ENCODE measurements at regions of chr13 and their contacts with region 1.

Region 1: GRCh38 chr13:27620377-27621115 is at the start of gene LNX2:
- DNase-seq: peak; percentile 98 to 99
- H3K4me3 ChIP-seq: peak within 1 kb of the TSS; percentile 76
- H3K4me3 Mint-ChIP-seq: peak within 1 kb of the TSS; percentile 99
- H3K27ac Mint-ChIP-seq: peak within 1 kb of the TSS; percentile 96
- H3K4me1 ChIP-seq: peaks cover 47% of the 10 kb centered on the region
- H3K4me1 Mint-ChIP-seq: peaks cover 39% of the 10 kb centered on the region
- H3K27me3 ChIP-seq: no peaks in the 10 kb centered on the region
- H3K27me3 Mint-ChIP-seq: no peaks in the 10 kb centered on the region
- CTCF ChIP-seq: no peak
- total RNA-seq, gene LNX2: 23.8 and 24.4 TPM in 2 replicates

Region 2: DNA sequence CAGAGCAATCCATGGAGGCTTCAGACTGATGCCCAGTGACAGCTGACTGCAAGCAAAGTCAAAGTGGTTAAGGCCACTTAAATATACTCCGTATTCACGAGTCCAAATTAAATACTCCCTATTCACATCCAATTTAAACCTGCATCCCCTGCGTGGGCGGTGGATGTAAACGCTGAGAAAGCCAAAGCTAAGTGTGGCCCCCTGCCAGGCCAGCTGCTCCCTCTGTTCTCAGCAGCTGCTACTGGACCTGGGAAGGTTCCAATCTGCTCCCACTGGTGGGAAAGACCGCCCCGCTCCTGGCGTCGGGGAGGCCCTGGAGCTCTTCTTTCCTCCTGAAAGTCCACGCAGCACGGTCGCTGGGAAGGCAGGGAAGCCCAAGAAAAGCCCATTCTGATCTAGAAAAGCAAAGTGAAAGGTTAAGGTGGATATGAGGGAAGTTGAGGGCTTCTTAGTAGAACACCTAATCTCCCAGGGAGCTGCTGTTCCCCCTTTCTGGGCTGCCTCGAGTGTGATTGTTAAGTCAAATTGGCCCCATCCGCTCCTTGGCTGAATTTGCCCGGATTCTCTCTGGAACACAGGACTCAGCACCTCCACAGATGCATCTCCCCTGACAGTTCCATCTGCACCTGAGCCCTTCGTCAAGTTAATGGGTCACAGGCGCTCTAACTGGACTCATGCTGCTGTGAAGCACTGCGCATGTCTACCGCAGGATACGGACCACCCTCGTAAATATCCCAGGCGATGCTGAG is 654.4 kb before region 1 on chr13:
- CTCF ChIA-PET with region 1: no interaction called
- POLR2A ChIA-PET with region 1: no interaction called
- intact Hi-C with region 1: loop called (anchors 10 kb)
- DNase-seq: no peak
- H3K4me3 ChIP-seq: no peak overlapping the region
- H3K4me3 Mint-ChIP-seq: no peak overlapping the region
- H3K27ac Mint-ChIP-seq: peak overlapping the region; percentile 92
- H3K4me1 ChIP-seq: peaks cover 84% of the 10 kb centered on the region
- H3K4me1 Mint-ChIP-seq: peaks cover 78% of the 10 kb centered on the region
- H3K27me3 ChIP-seq: no peaks in the 10 kb centered on the region
- H3K27me3 Mint-ChIP-seq: no peaks in the 10 kb centered on the region
- CTCF ChIP-seq: no peak

Region 3: DNA sequence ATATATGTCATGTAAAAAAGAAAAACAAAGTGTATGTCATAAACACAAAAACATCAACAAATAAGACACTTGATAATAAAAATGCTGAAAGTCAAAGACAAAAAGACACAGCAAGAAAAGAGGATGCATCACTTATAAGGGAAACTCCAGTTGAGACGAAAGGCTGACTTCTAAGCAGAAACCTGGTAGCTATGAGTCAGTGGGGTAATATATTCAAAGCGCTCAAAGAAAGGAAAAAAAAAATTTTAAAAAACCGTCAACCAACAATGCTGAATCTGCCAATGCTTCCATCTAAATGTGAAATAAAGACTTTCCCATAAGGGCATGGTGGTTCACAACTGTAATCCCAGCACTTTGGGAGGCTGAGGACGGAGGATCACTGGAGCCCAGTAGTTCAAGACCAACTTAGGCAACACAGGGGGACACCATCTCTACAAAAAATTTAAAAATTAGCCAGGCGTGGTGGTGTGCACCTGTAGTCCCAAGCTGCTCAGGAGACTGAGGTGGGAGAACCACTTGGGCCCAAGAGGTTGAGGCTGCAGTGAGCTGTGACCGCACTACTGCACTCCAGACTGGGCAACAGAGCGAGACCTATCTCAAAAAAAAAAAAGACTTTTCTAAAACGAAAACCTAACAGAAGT is 472.9 kb before region 1 on chr13:
- CTCF ChIA-PET with region 1: no interaction called
- POLR2A ChIA-PET with region 1: no interaction called
- intact Hi-C with region 1: no loop called
- DNase-seq: no peak
- H3K4me3 ChIP-seq: no peak overlapping the region
- H3K4me3 Mint-ChIP-seq: no peak overlapping the region
- H3K27ac Mint-ChIP-seq: no peak overlapping the region
- H3K4me1 ChIP-seq: peaks cover 7% of the 10 kb centered on the region
- H3K4me1 Mint-ChIP-seq: peaks cover 12% of the 10 kb centered on the region
- H3K27me3 ChIP-seq: no peaks in the 10 kb centered on the region
- H3K27me3 Mint-ChIP-seq: no peaks in the 10 kb centered on the region
- CTCF ChIP-seq: no peak

Region 4: GRCh38 chr13:27183561-27184147 is 436.9 kb before region 1 on chr13:
- CTCF ChIA-PET with region 1: no interaction called
- POLR2A ChIA-PET with region 1: interaction called, 21 read pairs
- intact Hi-C with region 1: no loop called
- DNase-seq: no peak
- H3K4me3 ChIP-seq: no peak overlapping the region
- H3K4me3 Mint-ChIP-seq: no peak overlapping the region
- H3K27ac Mint-ChIP-seq: no peak overlapping the region
- H3K4me1 ChIP-seq: peaks cover 9% of the 10 kb centered on the region; the same call in 1 of the 2 replicates
- H3K4me1 Mint-ChIP-seq: peaks cover 19% of the 10 kb centered on the region
- H3K27me3 ChIP-seq: no peaks in the 10 kb centered on the region
- H3K27me3 Mint-ChIP-seq: no peaks in the 10 kb centered on the region
- CTCF ChIP-seq: no peak

Region 5: DNA sequence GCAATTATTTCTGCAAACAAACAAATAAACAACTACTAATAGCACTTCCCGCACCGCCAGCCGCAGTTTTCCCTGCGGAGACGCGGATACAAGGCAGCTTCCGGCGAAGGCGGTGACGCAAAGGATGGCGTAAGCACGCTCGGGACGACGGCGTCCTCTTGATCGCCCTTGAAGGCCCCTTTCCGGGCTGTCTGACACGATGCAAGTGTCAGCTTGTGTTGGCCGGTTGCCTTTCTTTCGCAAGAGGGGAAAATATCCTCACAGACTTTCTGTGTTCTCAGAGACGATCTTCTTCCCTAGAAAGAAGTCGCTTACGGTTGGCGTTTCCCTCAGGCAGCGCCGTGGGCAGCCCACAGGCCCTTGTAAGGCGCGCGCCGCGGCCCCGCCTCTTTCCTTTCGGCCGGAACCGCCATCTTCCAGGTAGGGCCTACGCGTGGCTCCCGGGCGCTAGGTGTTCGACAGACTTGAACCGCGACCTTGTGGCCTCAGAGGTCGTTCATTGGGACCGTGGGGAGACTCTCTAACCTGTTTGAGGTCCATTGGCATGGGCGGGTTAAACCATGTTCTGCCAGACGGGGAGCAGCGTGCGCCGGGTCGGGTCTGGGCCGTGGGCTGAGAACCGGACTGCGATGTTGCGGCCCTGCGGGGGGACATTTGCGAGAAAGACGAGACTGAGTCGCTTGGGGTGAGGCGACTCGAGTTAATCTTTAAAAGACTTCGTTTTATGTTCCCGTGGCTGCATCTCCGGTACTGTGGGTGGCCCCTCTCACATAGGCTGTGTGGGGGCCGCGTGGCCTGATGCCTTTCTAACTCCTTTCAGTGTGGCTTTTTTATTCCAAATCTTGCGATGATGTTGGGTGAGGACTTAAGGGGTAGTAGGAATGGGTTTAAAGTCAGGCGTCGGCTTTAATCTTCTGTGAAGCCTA is 369.1 kb before region 1 on chr13 and contains the start of gene RPL21:
- CTCF ChIA-PET with region 1: no interaction called
- POLR2A ChIA-PET with region 1: no interaction called
- intact Hi-C with region 1: no loop called
- DNase-seq: peak; percentile 93 to 96
- H3K4me3 ChIP-seq: peak within 1 kb of the TSS; percentile 90
- H3K4me3 Mint-ChIP-seq: peak within 1 kb of the TSS; percentile 86
- H3K27ac Mint-ChIP-seq: peak within 1 kb of the TSS; percentile 99
- H3K4me1 ChIP-seq: peaks cover 16% of the 10 kb centered on the region; the same call in 1 of the 2 replicates
- H3K4me1 Mint-ChIP-seq: peaks cover 12% of the 10 kb centered on the region
- H3K27me3 ChIP-seq: no peaks in the 10 kb centered on the region
- H3K27me3 Mint-ChIP-seq: no peaks in the 10 kb centered on the region
- CTCF ChIP-seq: no peak
- total RNA-seq, gene RPL21: 1,158 and 1,201 TPM in 2 replicates

Region 6: DNA sequence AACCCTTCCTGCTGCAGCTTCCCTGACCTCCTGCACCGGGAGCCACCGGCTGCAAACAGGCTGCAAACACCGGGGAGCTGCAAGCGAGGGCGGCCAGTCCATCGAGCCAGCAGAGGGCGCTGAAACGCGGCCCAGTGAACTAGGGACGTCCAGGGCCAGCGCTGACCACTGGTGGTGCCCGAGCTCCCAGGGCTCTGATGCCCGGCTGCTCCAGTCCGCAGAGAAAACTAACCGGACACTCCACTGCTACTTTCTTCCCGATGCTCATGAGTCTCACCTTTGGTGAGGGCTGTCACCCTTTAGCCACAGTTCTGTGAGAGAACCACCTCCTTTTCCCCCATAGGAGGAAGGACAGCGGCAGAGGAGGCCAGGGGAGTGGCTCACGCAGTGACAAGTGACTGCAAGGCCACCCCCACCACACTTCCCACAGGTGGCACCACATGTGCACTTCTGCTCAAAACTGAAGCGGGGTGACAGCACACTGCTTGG is 87.3 kb before region 1 on chr13:
- CTCF ChIA-PET with region 1: no interaction called
- POLR2A ChIA-PET with region 1: no interaction called
- intact Hi-C with region 1: loop called (anchors 5 kb)
- DNase-seq: peak; percentile 72 to 87
- H3K4me3 ChIP-seq: no peak overlapping the region
- H3K4me3 Mint-ChIP-seq: no peak overlapping the region
- H3K27ac Mint-ChIP-seq: no peak overlapping the region
- H3K4me1 ChIP-seq: peaks cover 9% of the 10 kb centered on the region
- H3K4me1 Mint-ChIP-seq: peaks cover 11% of the 10 kb centered on the region
- H3K27me3 ChIP-seq: no peaks in the 10 kb centered on the region
- H3K27me3 Mint-ChIP-seq: no peaks in the 10 kb centered on the region
- CTCF ChIP-seq: peak; percentile 89 to 98

Region 7: DNA sequence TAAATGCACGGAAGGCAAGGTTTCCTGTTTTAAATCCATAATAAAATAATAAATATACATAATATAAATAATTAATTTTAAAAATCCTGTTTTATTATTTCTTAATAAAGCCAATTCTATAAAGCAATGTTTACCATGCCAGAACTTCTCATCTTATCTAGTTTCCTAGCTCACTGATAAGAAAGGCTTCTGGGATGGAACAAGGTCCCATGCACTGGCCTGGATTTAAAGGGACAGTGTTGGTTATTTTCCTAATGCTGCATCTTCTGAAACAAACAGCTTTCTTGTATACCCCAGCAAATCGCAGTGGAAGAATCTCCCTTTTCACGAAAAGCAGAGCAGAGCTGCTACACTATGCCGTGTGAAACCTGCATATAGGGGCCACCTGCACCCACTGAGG is 69.0 kb before region 1 on chr13:
- CTCF ChIA-PET with region 1: interaction called, 3 read pairs
- POLR2A ChIA-PET with region 1: interaction called, 7 read pairs
- intact Hi-C with region 1: loop called (anchors 2 kb)
- DNase-seq: peak in 1 of 2 experiments; percentile 21
- H3K4me3 ChIP-seq: no peak overlapping the region
- H3K4me3 Mint-ChIP-seq: peak overlapping the region; percentile 34
- H3K27ac Mint-ChIP-seq: no peak overlapping the region
- H3K4me1 ChIP-seq: peaks cover 40% of the 10 kb centered on the region
- H3K4me1 Mint-ChIP-seq: peaks cover 38% of the 10 kb centered on the region
- H3K27me3 ChIP-seq: no peaks in the 10 kb centered on the region
- H3K27me3 Mint-ChIP-seq: no peaks in the 10 kb centered on the region
- CTCF ChIP-seq: no peak

Region 8: DNA sequence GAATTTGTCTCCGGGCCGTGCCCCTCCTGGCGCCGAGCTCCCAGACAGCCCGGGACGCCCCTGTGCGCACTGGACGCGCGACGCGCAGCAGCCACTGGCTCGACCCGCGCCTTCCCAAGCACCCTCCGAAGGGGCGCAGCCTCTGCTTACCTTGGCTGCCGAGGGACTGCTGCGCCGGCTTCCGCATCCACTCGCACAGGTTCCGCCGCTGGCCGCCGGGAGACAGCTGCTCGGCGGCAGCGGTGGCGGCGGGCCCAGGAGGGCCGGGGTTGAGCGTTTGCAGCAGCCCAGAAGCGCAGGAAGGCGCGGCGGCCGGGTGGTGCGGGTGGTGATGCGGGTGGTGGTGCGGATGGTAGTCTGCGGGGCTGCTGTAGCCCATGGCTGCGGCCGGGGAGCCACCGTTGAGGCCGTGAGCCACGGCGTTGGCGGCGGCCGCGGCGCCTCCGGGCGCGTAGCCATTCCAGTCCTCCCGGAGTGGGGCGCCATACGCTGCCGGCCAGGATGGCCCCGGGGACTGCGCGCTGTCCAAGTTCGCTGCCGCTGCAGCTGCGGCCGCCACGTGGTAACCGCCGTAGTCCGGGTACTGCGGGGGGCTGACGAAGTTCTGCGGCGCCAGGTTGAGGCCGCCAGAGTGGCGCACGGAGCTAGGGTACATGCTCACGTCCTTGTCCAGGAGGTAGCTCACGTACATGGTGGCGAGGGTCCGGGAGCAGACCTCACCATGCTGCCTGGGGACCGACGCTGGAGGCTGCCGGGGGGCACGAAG is 348.0 kb after region 1 on chr13:
- CTCF ChIA-PET with region 1: no interaction called
- POLR2A ChIA-PET with region 1: no interaction called
- intact Hi-C with region 1: loop called (anchors 5 kb)
- DNase-seq: peak in 1 of 2 experiments; percentile 71
- H3K4me3 ChIP-seq: peak overlapping the region; percentile 96
- H3K4me3 Mint-ChIP-seq: peak overlapping the region; percentile 99
- H3K27ac Mint-ChIP-seq: peak overlapping the region; percentile 65
- H3K4me1 ChIP-seq: peaks cover 47% of the 10 kb centered on the region
- H3K4me1 Mint-ChIP-seq: peaks cover 10% of the 10 kb centered on the region
- H3K27me3 ChIP-seq: no peaks in the 10 kb centered on the region
- H3K27me3 Mint-ChIP-seq: no peaks in the 10 kb centered on the region
- CTCF ChIP-seq: peak in 1 of 2 experiments; percentile 27

Measured in Caco-2 (cell line).